ENCODE measurements at regions of chr1 and their contacts with region 1.

Region 1: GRCh38 chr1:10507111-10507879 is 32.5 kb downstream of the PEX14 start:
- DNase-seq: peak in 7 of 10 donors; percentile 48 to 69 (median 62)
- H3K4me3 ChIP-seq: peak overlapping the region in 1 of 59 donors; percentile 7
- H3K27ac ChIP-seq: no peak overlapping the region
- H3K27me3 ChIP-seq: no peaks in the 10 kb centered on the region
- CTCF ChIP-seq: peak; percentile 37 to 91 (median 76)

Region 2: GRCh38 chr1:10694633-10695627 is 187.6 kb after region 1 on chr1:
- intact Hi-C with region 1: loop called in 1 of 2 experiments (anchors 10 kb)
- DNase-seq: peak; percentile 60 to 91 (median 78)
- H3K4me3 ChIP-seq: peak overlapping the region in 58 of 59 donors; percentile 11 to 74 (median 55)
- H3K27ac ChIP-seq: peak overlapping the region in 25 of 59 donors; percentile 6 to 82 (median 60)
- H3K27me3 ChIP-seq: no peaks in the 10 kb centered on the region
- CTCF ChIP-seq: no peak

Region 3: GRCh38 chr1:10796019-10796944 is 289.0 kb after region 1 on chr1 and contains the start of gene CASZ1:
- intact Hi-C with region 1: loop called (anchors 10 kb)
- DNase-seq: peak in 9 of 10 donors; percentile 50 to 86 (median 70)
- H3K4me3 ChIP-seq: peak within 1 kb of the TSS; percentile 33 to 72 (median 58)
- H3K27ac ChIP-seq: no peak within 1 kb of the TSS
- H3K27me3 ChIP-seq: peaks cover 0 to 77% (median 48%) of the 10 kb centered on the region in 45 donors
- CTCF ChIP-seq: peak in 14 of 56 donors; percentile 8 to 45 (median 20)
- total RNA-seq, gene CASZ1: 0.34 to 6.1 (median 2.8) TPM

Region 4: DNA sequence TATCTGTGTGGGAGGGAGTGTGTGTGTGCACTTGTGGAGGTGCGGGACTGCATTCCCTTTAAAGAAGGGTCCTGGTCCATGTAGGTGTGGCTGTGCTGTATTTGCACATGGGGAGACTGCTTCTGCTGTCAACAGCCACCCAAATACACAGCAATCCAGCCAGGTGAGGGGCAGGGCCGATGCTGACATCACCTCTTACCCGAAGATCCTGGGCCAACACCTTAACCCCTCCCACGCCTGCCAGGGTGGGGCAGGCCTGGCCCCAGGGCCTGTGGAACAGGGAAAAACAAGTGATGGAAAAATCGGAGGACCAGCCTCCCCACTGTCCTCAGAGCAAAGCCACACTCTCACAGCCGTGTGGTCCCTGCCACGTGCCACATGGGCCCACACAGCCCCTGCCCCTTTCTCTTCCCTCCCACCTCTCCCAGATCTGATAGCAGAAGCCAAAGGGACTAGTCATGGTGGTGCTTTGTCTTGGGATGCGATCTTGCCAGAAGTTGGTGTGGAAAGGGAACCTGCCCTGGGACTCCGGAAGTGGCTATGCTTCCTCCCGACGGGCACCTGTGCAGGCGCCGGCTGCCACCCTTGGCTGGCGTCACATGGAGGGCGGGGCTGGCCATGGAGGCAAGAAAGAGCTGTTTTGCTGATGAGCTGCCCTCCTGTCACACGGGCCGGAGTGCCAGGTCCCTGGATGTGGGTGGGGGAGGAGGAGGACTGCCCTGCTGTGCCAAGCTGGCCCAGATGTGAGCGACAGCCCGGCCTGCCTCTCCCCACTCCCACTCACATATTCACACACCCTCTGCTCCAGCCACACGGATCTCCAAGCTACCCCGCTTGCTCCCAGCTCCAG is 296.9 kb after region 1 on chr1:
- intact Hi-C with region 1: loop called (anchors 10 kb)
- DNase-seq: no peak
- H3K4me3 ChIP-seq: no peak overlapping the region
- H3K27ac ChIP-seq: no peak overlapping the region
- H3K27me3 ChIP-seq: peaks cover 0 to 37% (median 10%) of the 10 kb centered on the region in 45 donors
- CTCF ChIP-seq: no peak

Region 5: GRCh38 chr1:10867138-10867721 is 359.9 kb after region 1 on chr1:
- intact Hi-C with region 1: loop called (anchors 2 to 5 kb)
- DNase-seq: peak in 8 of 10 donors; percentile 31 to 73 (median 48)
- H3K4me3 ChIP-seq: peak overlapping the region; percentile 22 to 66 (median 48)
- H3K27ac ChIP-seq: peak overlapping the region in 1 of 59 donors; percentile 18
- H3K27me3 ChIP-seq: peaks cover 0 to 14% (median 0%) of the 10 kb centered on the region in 45 donors
- CTCF ChIP-seq: peak in 55 of 56 donors; percentile 14 to 96 (median 73)

Region 6: GRCh38 chr1:10941891-10942541 is 434.7 kb after region 1 on chr1:
- intact Hi-C with region 1: loop called (anchors 5 to 10 kb)
- DNase-seq: peak in 5 of 10 donors; percentile 31 to 72 (median 49)
- H3K4me3 ChIP-seq: peak overlapping the region in 12 of 59 donors; percentile 13 to 41 (median 19)
- H3K27ac ChIP-seq: no peak overlapping the region
- H3K27me3 ChIP-seq: peaks cover 0 to 6% (median 0%) of the 10 kb centered on the region in 45 donors
- CTCF ChIP-seq: peak; percentile 61 to 94 (median 86)